Endothelial cell of umbilical vein (primary cell): ENCODE measurements at regions of chr19 and their contacts with region 1.

Region 1: DNA sequence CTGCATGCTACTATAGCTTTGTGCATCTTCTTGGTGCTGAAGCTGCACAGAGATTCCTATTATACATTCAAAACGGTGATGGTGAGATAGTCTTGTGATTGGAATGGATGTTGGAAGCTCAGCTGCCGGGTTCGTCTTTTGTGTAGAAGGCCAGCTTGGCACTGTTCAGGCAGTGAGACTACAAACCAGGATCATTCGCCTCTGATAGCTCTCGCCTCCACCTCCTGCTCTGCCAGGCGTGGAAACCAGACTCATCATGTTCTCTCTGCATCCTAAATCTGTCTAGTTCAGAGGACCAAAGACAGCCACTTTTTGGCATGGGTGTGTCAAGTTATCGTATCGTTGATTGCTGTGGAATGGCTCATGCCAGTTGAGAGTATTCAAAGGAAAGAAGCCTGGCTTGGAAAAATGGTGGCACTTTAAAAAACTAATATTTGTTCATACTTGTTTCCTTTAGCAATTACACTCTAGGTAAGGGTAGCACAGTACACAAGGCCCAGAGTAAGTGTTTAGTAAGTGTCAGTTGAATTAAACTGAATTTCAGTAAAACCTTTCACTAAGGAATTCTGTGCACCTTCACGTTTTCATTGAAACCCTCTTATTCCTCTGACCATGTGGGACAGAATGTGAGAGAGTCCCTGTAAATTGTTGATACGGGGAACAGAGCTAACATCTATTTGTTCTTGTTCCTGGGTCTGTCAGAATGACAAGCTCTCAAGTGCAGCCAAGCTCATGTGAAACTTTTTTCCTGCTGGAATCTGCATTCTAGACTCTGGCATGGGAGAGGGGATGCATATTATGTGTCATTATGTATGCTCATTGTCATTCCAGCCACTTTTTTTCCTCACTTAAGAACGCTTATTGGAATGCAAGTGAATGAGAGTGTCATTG is 69.8 kb downstream of the DPY19L3 start:
- DNase-seq: no peak
- H3K4me3 ChIP-seq: no peak overlapping the region
- H3K27ac ChIP-seq: no peak overlapping the region
- H3K4me1 ChIP-seq: no peaks in the 10 kb centered on the region
- H3K27me3 ChIP-seq: no peaks in the 10 kb centered on the region
- CTCF ChIP-seq: no peak
- POLR2A ChIP-seq: no peak

Region 2: GRCh38 chr19:32464279-32464678 is 11.1 kb before region 1 on chr19:
- CTCF ChIA-PET with region 1: interaction called, 19 read pairs
- POLR2A ChIA-PET with region 1: no interaction called
- dilution Hi-C with region 1: no loop called
- intact Hi-C with region 1: no loop called
- DNase-seq: peak; percentile 21
- H3K4me3 ChIP-seq: no peak overlapping the region
- H3K27ac ChIP-seq: no peak overlapping the region
- H3K4me1 ChIP-seq: no peaks in the 10 kb centered on the region
- H3K27me3 ChIP-seq: no peaks in the 10 kb centered on the region
- CTCF ChIP-seq: peak; percentile 4 to 16
- POLR2A ChIP-seq: no peak

Region 3: GRCh38 chr19:32498648-32499200 is 23.3 kb after region 1 on chr19:
- CTCF ChIA-PET with region 1: no interaction called
- POLR2A ChIA-PET with region 1: no interaction called
- dilution Hi-C with region 1: no loop called
- intact Hi-C with region 1: no loop called
- DNase-seq: no peak
- H3K4me3 ChIP-seq: no peak overlapping the region
- H3K27ac ChIP-seq: no peak overlapping the region
- H3K4me1 ChIP-seq: no peaks in the 10 kb centered on the region
- H3K27me3 ChIP-seq: no peaks in the 10 kb centered on the region
- CTCF ChIP-seq: no peak
- POLR2A ChIP-seq: no peak